PC-9 (cell line): ENCODE measurements at regions of chr11 and their contacts with region 1.

Region 1: GRCh38 chr11:108333403-108333899 is 110.6 kb downstream of the ATM start:
- DNase-seq: no peak
- H3K4me3 ChIP-seq: no peak overlapping the region
- H3K27ac ChIP-seq: no peak overlapping the region
- H3K4me1 ChIP-seq: peaks cover 3% of the 10 kb centered on the region
- H3K27me3 ChIP-seq: no peaks in the 10 kb centered on the region
- CTCF ChIP-seq: no peak

Region 2: DNA sequence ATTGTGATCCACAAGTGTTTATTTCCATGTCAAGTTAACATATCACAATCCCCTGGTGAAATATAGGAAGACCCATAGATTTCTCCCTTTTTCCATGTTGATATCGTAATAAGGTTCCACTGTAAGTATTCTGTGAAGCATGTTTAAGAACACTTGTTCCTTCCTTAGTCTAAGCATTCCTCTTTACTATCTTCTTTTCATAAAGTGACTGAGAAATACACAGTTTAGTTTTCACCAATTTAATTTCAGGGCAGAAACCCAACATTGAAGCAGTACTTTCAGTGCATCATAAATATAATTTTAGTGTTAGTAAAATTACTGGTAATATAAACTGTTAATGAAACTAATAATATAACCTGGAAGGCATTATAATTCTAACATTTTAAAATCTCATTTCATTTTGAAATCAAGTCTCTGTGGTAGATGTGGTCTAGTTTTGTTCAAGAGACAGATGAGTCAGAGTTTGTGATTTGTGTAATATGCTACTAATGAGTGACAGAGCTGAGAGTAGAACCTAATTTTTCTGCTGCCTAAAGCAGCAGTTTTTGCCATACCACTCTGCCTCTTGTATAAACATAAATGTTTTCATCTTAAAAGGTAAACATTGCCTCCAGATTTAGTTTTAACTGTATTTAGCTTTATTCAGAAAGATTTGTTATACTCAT is 31.2 kb before region 1 on chr11:
- CTCF ChIA-PET with region 1: no interaction called
- POLR2A ChIA-PET with region 1: interaction called, 11 read pairs
- intact Hi-C with region 1: no loop called
- DNase-seq: no peak
- H3K4me3 ChIP-seq: no peak overlapping the region
- H3K27ac ChIP-seq: no peak overlapping the region
- H3K4me1 ChIP-seq: no peaks in the 10 kb centered on the region
- H3K27me3 ChIP-seq: no peaks in the 10 kb centered on the region
- CTCF ChIP-seq: no peak